Caco-2 (cell line): ENCODE measurements at regions of chr3 and their contacts with region 1.

Region 1: GRCh38 chr3:14921078-14921616 is 26.2 kb upstream of the NR2C2 start:
- DNase-seq: peak; percentile 76 to 81
- H3K4me3 ChIP-seq: no peak overlapping the region
- H3K4me3 Mint-ChIP-seq: no peak overlapping the region
- H3K27ac Mint-ChIP-seq: no peak overlapping the region
- H3K4me1 ChIP-seq: no peaks in the 10 kb centered on the region
- H3K4me1 Mint-ChIP-seq: no peaks in the 10 kb centered on the region
- H3K27me3 ChIP-seq: no peaks in the 10 kb centered on the region
- H3K27me3 Mint-ChIP-seq: peaks cover 8% of the 10 kb centered on the region
- CTCF ChIP-seq: peak; percentile 93 to 96

Region 2: GRCh38 chr3:14508961-14509795 is 412.0 kb before region 1 on chr3:
- CTCF ChIA-PET with region 1: interaction called, 3 read pairs
- POLR2A ChIA-PET with region 1: no interaction called
- intact Hi-C with region 1: loop called (anchors 5 kb)
- DNase-seq: peak; percentile 72 to 85
- H3K4me3 ChIP-seq: no peak overlapping the region
- H3K4me3 Mint-ChIP-seq: peak overlapping the region; percentile 27
- H3K27ac Mint-ChIP-seq: no peak overlapping the region
- H3K4me1 ChIP-seq: no peaks in the 10 kb centered on the region
- H3K4me1 Mint-ChIP-seq: no peaks in the 10 kb centered on the region
- H3K27me3 ChIP-seq: no peaks in the 10 kb centered on the region; the same call in 1 of the 2 replicates
- H3K27me3 Mint-ChIP-seq: no peaks in the 10 kb centered on the region
- CTCF ChIP-seq: peak; percentile 91 to 98

Region 3: DNA sequence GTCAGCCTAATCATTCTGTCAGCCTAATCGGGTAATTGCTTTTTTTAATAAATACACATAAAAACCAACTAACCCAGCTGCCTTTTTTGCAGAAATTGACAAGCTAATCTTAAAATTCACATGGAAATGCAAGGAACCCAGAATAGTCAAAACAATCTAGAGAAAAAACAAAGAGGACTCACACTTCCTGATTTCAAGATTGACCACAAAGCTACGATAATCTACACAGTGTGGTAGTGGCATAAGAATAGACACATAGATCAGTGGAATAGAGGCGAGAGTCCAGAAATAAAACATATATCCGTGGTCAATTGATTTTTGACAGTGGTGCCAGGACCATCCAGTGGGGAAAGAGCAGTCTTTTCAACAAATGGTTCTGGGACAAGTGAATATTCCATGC is 248.6 kb before region 1 on chr3:
- CTCF ChIA-PET with region 1: interaction called, 14 read pairs
- POLR2A ChIA-PET with region 1: no interaction called
- intact Hi-C with region 1: loop called (anchors 1 kb)
- DNase-seq: no peak
- H3K4me3 ChIP-seq: no peak overlapping the region
- H3K4me3 Mint-ChIP-seq: no peak overlapping the region
- H3K27ac Mint-ChIP-seq: no peak overlapping the region
- H3K4me1 ChIP-seq: peaks cover 13% of the 10 kb centered on the region
- H3K4me1 Mint-ChIP-seq: peaks cover 15% of the 10 kb centered on the region
- H3K27me3 ChIP-seq: no peaks in the 10 kb centered on the region
- H3K27me3 Mint-ChIP-seq: no peaks in the 10 kb centered on the region
- CTCF ChIP-seq: no peak

Region 4: DNA sequence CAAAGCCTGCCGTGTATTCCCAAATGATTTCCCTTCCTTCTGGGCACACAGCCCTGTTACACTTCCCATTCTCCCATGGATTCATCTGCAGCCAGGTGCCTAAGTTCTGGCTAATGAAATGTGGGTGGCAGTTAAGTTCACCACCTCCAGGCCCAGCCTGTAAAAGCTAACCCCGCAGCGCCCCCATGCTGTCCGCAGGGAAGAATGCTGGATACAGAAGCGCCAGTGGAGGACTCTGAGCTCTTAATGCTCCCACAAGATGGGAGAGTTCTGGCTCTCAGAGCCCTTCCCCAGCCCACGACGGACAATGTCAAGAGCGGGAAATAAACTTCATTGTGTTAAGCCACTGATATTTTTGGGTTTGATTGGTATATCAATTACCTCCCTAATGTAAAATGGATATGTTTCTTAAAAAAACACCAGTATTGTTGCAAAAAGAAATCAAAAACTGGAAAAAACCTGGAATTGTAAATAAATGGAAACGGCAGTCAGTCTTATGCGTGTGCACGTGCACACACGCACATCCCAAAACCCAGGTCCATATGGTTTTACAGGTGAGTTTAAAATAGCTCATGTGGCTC is 140.1 kb before region 1 on chr3:
- CTCF ChIA-PET with region 1: interaction called, 12 read pairs
- POLR2A ChIA-PET with region 1: no interaction called
- intact Hi-C with region 1: no loop called
- DNase-seq: peak; percentile 78
- H3K4me3 ChIP-seq: no peak overlapping the region
- H3K4me3 Mint-ChIP-seq: no peak overlapping the region
- H3K27ac Mint-ChIP-seq: no peak overlapping the region
- H3K4me1 ChIP-seq: no peaks in the 10 kb centered on the region
- H3K4me1 Mint-ChIP-seq: no peaks in the 10 kb centered on the region
- H3K27me3 ChIP-seq: no peaks in the 10 kb centered on the region
- H3K27me3 Mint-ChIP-seq: peaks cover under 1% of the 10 kb centered on the region
- CTCF ChIP-seq: peak; percentile 78 to 83

Region 5: DNA sequence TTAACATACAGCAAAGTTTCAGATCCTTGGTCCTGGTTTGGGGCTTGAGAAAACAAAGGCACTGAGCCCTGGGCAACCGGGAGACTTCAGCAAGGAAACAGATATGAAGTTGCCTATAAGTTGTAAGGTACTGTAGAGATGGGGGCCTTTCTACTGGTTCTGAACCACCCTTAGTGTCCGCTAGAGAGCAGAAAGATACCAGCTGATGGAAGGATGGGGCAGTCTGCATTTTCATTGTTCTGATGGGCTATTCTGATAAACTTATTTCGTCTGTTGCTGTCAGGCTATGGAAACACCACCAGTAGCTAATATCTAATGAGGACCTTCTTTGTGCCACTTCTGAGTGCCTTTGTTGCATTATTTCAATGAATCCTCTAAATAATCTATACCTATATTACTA is 63.6 kb before region 1 on chr3:
- CTCF ChIA-PET with region 1: interaction called, 6 read pairs
- POLR2A ChIA-PET with region 1: no interaction called
- intact Hi-C with region 1: loop called (anchors 2 kb)
- DNase-seq: no peak
- H3K4me3 ChIP-seq: no peak overlapping the region
- H3K4me3 Mint-ChIP-seq: no peak overlapping the region
- H3K27ac Mint-ChIP-seq: no peak overlapping the region
- H3K4me1 ChIP-seq: no peaks in the 10 kb centered on the region
- H3K4me1 Mint-ChIP-seq: no peaks in the 10 kb centered on the region
- H3K27me3 ChIP-seq: no peaks in the 10 kb centered on the region; the same call in none of the 2 replicates
- H3K27me3 Mint-ChIP-seq: peaks cover 13% of the 10 kb centered on the region
- CTCF ChIP-seq: peak in 1 of 2 experiments; percentile 30

Region 6: GRCh38 chr3:15045667-15046066 is 124.5 kb after region 1 on chr3:
- CTCF ChIA-PET with region 1: interaction called, 3 read pairs
- POLR2A ChIA-PET with region 1: no interaction called
- intact Hi-C with region 1: loop called (anchors 5 kb)
- DNase-seq: no peak
- H3K4me3 ChIP-seq: no peak overlapping the region
- H3K4me3 Mint-ChIP-seq: no peak overlapping the region
- H3K27ac Mint-ChIP-seq: no peak overlapping the region
- H3K4me1 ChIP-seq: no peaks in the 10 kb centered on the region
- H3K4me1 Mint-ChIP-seq: no peaks in the 10 kb centered on the region
- H3K27me3 ChIP-seq: no peaks in the 10 kb centered on the region
- H3K27me3 Mint-ChIP-seq: no peaks in the 10 kb centered on the region
- CTCF ChIP-seq: no peak